ENCODE measurements at regions of chr14 and their contacts with region 1.

Region 1: GRCh38 chr14:105045710-105046326 is 19.4 kb downstream of the GPR132 start:
- DNase-seq: peak; percentile 83 to 95
- H3K4me3 ChIP-seq: no peak overlapping the region
- H3K4me3 Mint-ChIP-seq: no peak overlapping the region
- H3K27ac Mint-ChIP-seq: no peak overlapping the region
- H3K4me1 ChIP-seq: peaks cover 3% of the 10 kb centered on the region; the same call in 1 of the 2 replicates
- H3K4me1 Mint-ChIP-seq: no peaks in the 10 kb centered on the region
- H3K27me3 ChIP-seq: no peaks in the 10 kb centered on the region; the same call in 1 of the 2 replicates
- H3K27me3 Mint-ChIP-seq: peaks cover 5% of the 10 kb centered on the region
- CTCF ChIP-seq: peak; percentile 99

Region 2: GRCh38 chr14:104985675-104986525 is 59.9 kb before region 1 on chr14 and contains the start of gene CLBA1:
- CTCF ChIA-PET with region 1: no interaction called
- POLR2A ChIA-PET with region 1: no interaction called
- intact Hi-C with region 1: no loop called
- DNase-seq: peak; percentile 87 to 92
- H3K4me3 ChIP-seq: peak within 1 kb of the TSS; percentile 62
- H3K4me3 Mint-ChIP-seq: peak within 1 kb of the TSS; percentile 66
- H3K27ac Mint-ChIP-seq: peak within 1 kb of the TSS; percentile 53
- H3K4me1 ChIP-seq: 0 out of 2 replicates have a peak, but pooled peaks cover 3% of the 10 kb centered on the region
- H3K4me1 Mint-ChIP-seq: no peaks in the 10 kb centered on the region
- H3K27me3 ChIP-seq: no peaks in the 10 kb centered on the region
- H3K27me3 Mint-ChIP-seq: no peaks in the 10 kb centered on the region
- CTCF ChIP-seq: no peak
- total RNA-seq, gene CLBA1: 3.0 and 3.2 TPM in 2 replicates

Region 3: DNA sequence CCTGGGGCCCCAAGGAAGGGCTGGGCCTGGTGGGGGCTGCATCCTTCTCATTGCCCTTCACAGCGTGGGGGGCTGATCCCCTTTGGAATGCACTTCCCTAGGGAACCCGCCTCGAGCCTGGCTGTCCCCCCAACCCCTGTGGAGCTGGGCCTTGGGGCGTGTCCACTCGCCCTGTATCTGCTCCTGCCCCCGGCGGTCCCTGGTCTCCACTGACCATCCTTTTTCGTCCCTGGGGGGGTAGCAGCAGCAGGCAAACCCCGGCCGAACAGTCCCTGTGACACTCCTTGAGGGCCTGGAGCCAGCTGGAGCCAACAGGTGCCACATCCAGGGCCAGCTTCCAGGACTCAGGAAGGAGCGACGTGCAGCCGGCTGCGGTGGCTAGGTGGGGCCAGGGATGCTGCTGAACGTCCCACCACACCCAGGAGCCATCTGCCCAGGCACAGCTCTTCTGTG is 28.8 kb after region 1 on chr14:
- CTCF ChIA-PET with region 1: interaction called, 13 read pairs
- POLR2A ChIA-PET with region 1: no interaction called
- intact Hi-C with region 1: no loop called
- DNase-seq: no peak
- H3K4me3 ChIP-seq: no peak overlapping the region
- H3K4me3 Mint-ChIP-seq: no peak overlapping the region
- H3K27ac Mint-ChIP-seq: no peak overlapping the region
- H3K4me1 ChIP-seq: peaks cover 11% of the 10 kb centered on the region; the same call in 1 of the 2 replicates
- H3K4me1 Mint-ChIP-seq: peaks cover 13% of the 10 kb centered on the region
- H3K27me3 ChIP-seq: no peaks in the 10 kb centered on the region
- H3K27me3 Mint-ChIP-seq: peaks cover 4% of the 10 kb centered on the region
- CTCF ChIP-seq: no peak

Measured in Caco-2 (cell line).